Activated naive CD4-positive, alpha-beta T cell treated with anti-CD3 and anti-CD28 coated beads for 36 hours (primary cell): ENCODE measurements at regions of chr14 and their contacts with region 1.

Region 1: DNA sequence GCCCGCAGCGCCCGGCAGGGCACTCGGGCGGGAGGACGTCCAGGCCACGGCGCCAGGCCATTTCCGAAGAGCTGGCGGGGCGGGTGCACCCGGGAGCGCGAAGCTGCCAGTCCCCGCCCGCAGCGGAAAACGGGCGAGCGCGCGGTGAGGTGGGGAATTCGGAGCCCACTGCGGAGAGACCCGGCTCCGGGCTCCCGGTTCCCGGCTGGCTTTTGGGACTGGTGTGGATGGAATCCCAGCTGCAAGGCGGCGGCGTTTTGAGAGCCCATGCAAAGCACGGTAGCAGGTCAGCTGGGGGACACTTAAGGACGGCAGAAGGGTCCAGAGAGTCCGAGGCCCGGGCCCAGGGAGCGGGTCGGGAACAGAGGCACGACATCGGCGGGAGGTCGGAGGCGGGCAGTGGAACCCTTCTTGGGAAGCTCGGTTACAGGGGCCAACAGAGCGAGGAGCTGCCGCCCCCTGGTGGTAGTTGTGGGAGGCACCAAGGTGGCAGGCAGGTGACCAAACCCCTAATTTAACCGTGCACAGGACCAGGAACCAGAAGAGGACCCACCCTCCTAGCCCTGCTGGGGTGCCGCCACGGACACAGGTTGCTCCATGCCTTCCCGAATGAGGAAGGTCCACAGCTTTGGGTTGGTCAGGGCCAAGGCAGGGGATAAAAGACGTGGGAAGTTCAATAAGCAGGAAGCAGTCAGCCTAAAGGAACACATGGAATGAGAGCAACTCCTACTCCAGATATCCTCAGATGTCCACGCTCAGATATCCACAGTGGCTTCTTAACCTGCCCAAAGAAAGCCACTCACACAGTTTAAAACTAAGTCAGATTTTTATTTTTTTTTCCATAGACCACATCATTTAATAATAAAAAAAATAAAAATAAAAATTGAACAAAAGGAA is 685 bp upstream of the CDH24 start:
- DNase-seq: peak; percentile 92
- H3K4me3 Mint-ChIP-seq: peak overlapping the region; percentile 80
- H3K27ac Mint-ChIP-seq: no peak overlapping the region
- H3K4me1 Mint-ChIP-seq: peaks cover 16% of the 10 kb centered on the region
- H3K27me3 Mint-ChIP-seq: peaks cover 5% of the 10 kb centered on the region

Region 2: DNA sequence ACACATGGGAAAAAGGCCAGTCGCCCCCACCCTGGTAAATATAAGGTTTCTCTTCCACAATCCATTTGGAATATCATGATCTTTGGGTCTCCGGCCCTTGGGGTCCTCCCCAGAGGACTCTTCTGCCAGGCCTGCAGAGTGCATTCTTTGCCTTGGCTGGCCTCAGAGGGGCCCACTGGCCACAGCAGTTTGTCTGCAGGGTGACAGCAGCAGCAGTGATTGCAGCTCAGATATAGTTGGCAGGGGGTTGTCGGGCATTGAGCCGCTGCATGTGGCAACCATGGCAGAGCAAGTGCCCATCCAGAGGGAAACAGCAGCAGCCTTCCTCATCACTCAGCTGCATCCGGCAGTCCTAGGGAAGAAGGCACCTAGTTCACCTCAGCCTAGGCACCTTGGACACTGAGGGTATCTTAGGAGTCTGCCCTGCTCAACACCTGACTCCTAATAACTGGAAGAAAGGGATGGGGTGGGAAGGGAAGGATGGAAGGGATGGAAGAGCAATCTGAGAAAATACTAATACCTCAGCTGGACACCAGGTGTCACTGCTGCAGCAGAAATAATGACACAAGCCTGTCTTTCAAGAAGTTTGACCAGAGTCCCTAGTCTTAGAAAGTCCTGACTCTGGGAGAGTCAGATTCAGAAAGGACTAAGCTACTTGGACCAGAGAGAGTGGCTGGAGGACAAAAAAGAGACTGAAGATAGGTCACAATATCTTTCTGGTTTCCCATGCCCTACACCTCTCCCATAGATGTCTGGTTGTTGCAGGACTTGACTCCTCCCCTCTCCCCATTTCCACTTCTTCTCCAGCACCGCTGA is 84.6 kb before region 1 on chr14:
- CTCF ChIA-PET with region 1: interaction called, 128 read pairs
- intact Hi-C with region 1: loop called (anchors 1 kb)
- DNase-seq: peak; percentile 64
- H3K4me3 Mint-ChIP-seq: no peak overlapping the region
- H3K27ac Mint-ChIP-seq: no peak overlapping the region
- H3K4me1 Mint-ChIP-seq: no peaks in the 10 kb centered on the region
- H3K27me3 Mint-ChIP-seq: no peaks in the 10 kb centered on the region

Region 3: GRCh38 chr14:23000860-23001259 is 57.1 kb before region 1 on chr14:
- CTCF ChIA-PET with region 1: interaction called, 713 read pairs
- intact Hi-C with region 1: no loop called
- DNase-seq: no peak
- H3K4me3 Mint-ChIP-seq: no peak overlapping the region
- H3K27ac Mint-ChIP-seq: no peak overlapping the region
- H3K4me1 Mint-ChIP-seq: peaks cover 7% of the 10 kb centered on the region
- H3K27me3 Mint-ChIP-seq: no peaks in the 10 kb centered on the region

Region 4: DNA sequence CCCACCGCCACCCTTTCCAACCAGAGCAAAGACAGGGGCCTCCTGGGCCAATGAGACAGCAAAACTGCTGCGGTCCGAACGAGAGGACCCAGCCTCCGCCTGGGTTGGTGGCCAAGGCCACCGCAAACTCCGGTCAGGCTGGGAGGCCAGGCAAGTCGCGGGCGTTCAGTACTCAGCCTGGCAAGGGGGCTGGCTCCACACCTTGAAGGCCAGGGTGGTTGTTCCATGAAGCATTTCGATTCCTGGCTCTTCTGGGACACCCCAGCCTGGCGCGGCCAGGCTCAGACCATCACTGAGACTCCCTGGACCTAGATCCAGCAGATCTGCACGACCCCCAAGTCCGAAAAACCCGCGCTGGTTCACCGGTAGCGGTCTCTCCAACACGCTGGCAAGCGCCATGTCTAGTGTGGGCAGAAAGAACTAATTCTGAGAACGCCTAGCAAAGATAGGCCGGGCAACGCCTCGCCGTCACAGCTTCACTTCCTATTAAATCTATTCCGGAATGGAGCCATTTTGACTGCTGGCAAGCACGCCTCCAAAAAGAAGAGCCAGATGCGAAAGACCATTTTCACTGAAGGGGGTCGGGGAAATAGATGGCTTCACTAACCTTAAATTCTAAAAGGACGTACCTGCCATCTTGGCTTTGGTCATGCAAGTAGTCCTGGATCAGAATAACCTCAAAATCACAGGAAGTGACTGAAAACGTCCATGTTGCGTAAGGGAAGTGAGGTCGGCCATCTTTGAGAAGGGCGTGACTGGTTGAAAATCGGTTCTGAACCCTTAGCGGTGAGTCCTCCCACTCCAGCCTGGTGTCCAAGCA is 23.3 kb before region 1 on chr14 and contains the start of gene PSMB5:
- CTCF ChIA-PET with region 1: interaction called, 10 read pairs
- intact Hi-C with region 1: loop called (anchors 1 kb)
- DNase-seq: peak; percentile 96
- H3K4me3 Mint-ChIP-seq: peak within 1 kb of the TSS; percentile 88
- H3K27ac Mint-ChIP-seq: peak within 1 kb of the TSS; percentile 96
- H3K4me1 Mint-ChIP-seq: peaks cover 34% of the 10 kb centered on the region
- H3K27me3 Mint-ChIP-seq: no peaks in the 10 kb centered on the region
- total RNA-seq, gene PSMB5: 120 to 125 TPM

Region 5: DNA sequence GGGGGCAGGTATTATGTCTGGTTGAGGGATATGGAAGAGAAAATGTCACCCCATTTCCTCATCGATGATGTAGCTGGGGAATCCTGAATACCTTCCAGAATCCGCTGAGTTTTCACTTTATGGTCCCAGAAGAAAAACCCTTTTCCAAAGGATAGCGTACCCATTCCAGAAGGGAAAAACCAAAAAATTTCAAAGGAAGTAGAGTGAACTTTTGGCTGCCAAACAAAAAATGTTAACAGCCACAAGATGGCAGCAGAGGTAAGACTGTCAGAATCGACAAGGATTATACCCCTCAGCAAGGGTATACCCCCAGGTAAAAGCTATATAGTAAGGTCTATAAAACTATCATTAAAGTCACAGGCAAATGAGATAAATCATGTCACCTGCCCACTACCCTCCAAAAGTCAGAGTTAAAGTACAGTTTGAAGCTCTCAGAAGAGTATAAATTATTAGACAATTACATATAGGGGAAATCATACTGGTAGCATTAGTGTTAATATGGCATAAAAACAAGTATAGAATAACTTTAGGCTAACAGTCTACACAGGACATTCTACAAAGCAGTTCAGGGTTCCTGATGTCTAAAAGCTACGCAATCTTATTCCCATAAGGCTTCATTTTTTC is 18.9 kb after region 1 on chr14:
- CTCF ChIA-PET with region 1: interaction called, 32 read pairs
- intact Hi-C with region 1: no loop called
- DNase-seq: peak; percentile 37
- H3K4me3 Mint-ChIP-seq: no peak overlapping the region
- H3K27ac Mint-ChIP-seq: no peak overlapping the region
- H3K4me1 Mint-ChIP-seq: peaks cover 9% of the 10 kb centered on the region
- H3K27me3 Mint-ChIP-seq: no peaks in the 10 kb centered on the region

Region 6: DNA sequence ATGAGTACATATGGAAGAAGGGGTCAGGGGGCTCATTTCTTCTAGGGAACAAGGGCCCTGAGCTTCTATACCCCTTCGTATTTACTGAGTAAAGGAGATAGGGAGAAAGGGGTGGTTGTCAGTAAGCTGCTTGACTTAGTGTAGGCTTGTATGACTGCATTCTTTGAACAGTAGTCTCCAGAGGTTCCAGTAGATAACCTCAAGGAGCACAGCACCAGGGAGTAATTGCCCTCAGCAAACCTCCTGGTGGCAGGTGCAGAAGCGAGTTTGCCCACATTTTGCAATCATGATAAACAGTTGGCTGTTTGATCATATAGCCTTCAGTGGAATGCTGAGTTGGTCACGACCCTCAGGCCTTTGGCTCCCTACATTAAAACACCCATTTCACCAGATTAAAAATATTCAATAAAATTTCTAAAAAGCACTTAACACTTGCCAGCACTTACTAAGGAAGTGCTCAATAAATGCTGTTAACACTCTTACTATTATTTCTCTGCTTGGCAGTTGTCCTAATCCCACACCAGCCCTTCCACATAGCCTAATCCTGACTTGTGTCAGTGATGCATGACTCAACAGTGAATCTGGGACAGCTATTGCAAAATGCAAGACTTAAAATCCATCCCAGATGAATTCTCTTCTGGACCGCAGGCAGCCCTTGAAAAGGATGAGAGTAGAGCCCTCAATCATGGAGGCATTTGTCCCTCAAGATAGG is 927.0 kb after region 1 on chr14:
- CTCF ChIA-PET with region 1: no interaction called
- intact Hi-C with region 1: no loop called
- DNase-seq: no peak
- H3K4me3 Mint-ChIP-seq: no peak overlapping the region
- H3K27ac Mint-ChIP-seq: no peak overlapping the region
- H3K4me1 Mint-ChIP-seq: peaks cover 26% of the 10 kb centered on the region
- H3K27me3 Mint-ChIP-seq: no peaks in the 10 kb centered on the region